HCT116 (cell line): ENCODE measurements at regions of chr6 and their contacts with region 1.

Region 1: GRCh38 chr6:32862725-32863124 is 8.7 kb downstream of the PSMB9 start:
- DNase-seq: no peak
- ATAC-seq: no peak
- H3K4me3 ChIP-seq: no peak overlapping the region
- H3K27ac ChIP-seq: no peak overlapping the region
- H3K4me1 ChIP-seq: peaks cover 2 to 17% of the 10 kb centered on the region in 2 experiments; a peak in 3 of 4 replicates
- H3K27me3 ChIP-seq: no peaks in the 10 kb centered on the region
- CTCF ChIP-seq: no peak
- POLR2A ChIP-seq: no peak
- RAD21 ChIP-seq: no peak

Region 2: DNA sequence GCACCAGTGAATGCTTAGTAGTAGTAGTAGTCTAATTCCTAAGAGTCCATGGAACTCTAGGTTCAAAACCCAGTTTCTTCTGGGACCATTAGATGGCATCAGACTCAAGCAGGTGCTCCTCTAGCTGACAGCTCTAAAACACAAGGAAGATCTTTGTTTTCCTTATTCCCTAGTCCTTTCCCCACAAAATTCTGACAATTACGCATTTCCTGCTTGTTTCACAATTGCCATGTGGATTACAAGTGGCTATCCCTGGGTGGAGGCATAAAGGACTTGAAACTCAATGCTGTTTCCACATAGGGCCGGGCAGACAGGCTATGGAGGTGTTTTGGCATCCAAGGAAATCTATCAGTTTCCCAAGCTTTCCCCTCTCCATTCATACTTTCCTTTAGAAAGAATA is 36.8 kb before region 1 on chr6:
- CTCF ChIA-PET with region 1: interaction called, 55 read pairs
- POLR2A ChIA-PET with region 1: no interaction called
- RAD21 ChIA-PET with region 1: interaction called in 1 of 2 experiments, 6 read pairs
- intact Hi-C with region 1: no loop called
- DNase-seq: no peak
- ATAC-seq: peak; percentile 52
- H3K4me3 ChIP-seq: no peak overlapping the region
- H3K27ac ChIP-seq: no peak overlapping the region
- H3K4me1 ChIP-seq: no peaks in the 10 kb centered on the region
- H3K27me3 ChIP-seq: no peaks in the 10 kb centered on the region
- CTCF ChIP-seq: peak; percentile 27 to 44 (median 34); a peak in 4 of 6 replicates
- POLR2A ChIP-seq: no peak
- RAD21 ChIP-seq: peak; percentile 71

Region 3: GRCh38 chr6:33118525-33119123 is 255.9 kb after region 1 on chr6:
- CTCF ChIA-PET with region 1: no interaction called
- POLR2A ChIA-PET with region 1: no interaction called
- RAD21 ChIA-PET with region 1: no interaction called
- intact Hi-C with region 1: no loop called
- DNase-seq: peak; percentile 46
- ATAC-seq: peak; percentile 70
- H3K4me3 ChIP-seq: no peak overlapping the region
- H3K27ac ChIP-seq: no peak overlapping the region
- H3K4me1 ChIP-seq: peaks cover 0 to 4% of the 10 kb centered on the region in 2 experiments; a peak in 1 of 4 replicates
- H3K27me3 ChIP-seq: peaks cover 14% of the 10 kb centered on the region; the same call in 1 of the 2 replicates
- CTCF ChIP-seq: peak; percentile 60 to 84 (median 74)
- POLR2A ChIP-seq: no peak
- RAD21 ChIP-seq: peak; percentile 70